ENCODE measurements at regions of chr12 and their contacts with region 1.

Region 1: DNA sequence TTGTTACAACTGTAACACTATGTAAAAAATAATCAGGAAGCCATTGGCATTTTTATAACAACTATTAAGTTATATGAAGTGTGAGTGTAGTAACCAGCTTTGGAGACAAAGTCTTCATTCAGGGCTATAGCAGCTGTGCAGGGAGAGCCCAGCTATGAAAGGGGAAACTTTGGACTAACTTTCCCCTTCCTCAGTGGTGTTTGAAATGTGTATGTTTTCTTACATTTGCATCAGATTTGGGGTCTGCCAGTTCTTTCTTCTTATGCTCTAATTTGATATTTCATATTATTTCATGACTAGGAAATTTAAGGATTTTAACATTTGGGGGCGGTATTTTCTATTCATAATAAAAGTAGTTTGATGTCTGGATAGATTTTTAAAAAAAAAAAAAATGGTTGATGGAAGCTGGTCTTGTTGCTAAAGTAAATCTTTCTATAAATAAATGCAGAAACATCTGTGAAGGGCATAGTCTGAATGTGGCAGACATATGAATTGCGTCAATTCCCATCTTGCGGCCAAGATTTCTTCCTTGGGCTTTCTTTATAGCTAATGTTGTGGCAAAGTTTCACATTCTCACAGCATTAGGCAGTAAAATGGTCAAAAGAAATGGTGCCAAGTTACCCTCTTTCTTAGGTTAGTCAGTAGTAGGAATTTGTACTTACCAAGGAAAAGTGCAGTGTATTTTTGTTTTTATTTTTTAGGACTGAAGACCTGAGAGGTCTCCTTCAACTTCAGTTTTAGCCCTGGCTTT is 35.6 kb downstream of the RASSF8 start:
- DNase-seq: no peak
- ATAC-seq: no peak
- H3K4me3 ChIP-seq: no peak overlapping the region
- H3K4me3 Mint-ChIP-seq: no peak overlapping the region
- H3K27ac ChIP-seq: no peak overlapping the region
- H3K27ac Mint-ChIP-seq: no peak overlapping the region
- H3K4me1 ChIP-seq: no peaks in the 10 kb centered on the region
- H3K4me1 Mint-ChIP-seq: no peaks in the 10 kb centered on the region
- H3K27me3 ChIP-seq: no peaks in the 10 kb centered on the region
- H3K27me3 Mint-ChIP-seq: peaks cover 0 to 4% of the 10 kb centered on the region in 2 donors

Region 2: DNA sequence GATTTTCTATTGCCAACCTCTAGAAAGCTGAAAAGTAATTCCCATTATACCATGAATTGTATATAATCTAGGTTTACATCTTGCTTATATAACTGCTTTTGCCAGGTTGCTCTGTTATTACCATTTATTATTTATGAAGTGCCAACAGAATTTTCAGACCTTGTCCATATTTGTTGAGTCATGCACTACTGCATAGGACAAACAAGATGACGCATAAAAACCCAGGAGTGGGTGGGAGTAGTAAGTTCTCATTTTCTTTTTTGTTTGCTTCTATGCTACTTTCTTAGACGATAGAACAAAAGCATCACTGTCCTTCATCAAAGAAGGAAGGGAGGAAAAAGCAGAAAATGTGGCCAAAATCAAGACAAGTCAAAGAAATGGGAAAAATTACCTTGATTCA is 154.6 kb before region 1 on chr12:
- CTCF ChIA-PET with region 1: no interaction called
- POLR2A ChIA-PET with region 1: no interaction called
- DNase-seq: no peak
- ATAC-seq: no peak
- H3K4me3 ChIP-seq: no peak overlapping the region
- H3K4me3 Mint-ChIP-seq: no peak overlapping the region
- H3K27ac ChIP-seq: no peak overlapping the region
- H3K27ac Mint-ChIP-seq: no peak overlapping the region
- H3K4me1 ChIP-seq: peaks cover 0 to 4% of the 10 kb centered on the region in 2 experiments
- H3K4me1 Mint-ChIP-seq: peaks cover 0 to 12% (median 4%) of the 10 kb centered on the region in 3 donors
- H3K27me3 ChIP-seq: no peaks in the 10 kb centered on the region
- H3K27me3 Mint-ChIP-seq: no peaks in the 10 kb centered on the region

Region 3: GRCh38 chr12:25866586-25867378 is 127.3 kb before region 1 on chr12:
- CTCF ChIA-PET with region 1: no interaction called
- POLR2A ChIA-PET with region 1: interaction called in 1 of 2 experiments, 10 read pairs
- DNase-seq: no peak
- ATAC-seq: no peak
- H3K4me3 ChIP-seq: no peak overlapping the region
- H3K4me3 Mint-ChIP-seq: no peak overlapping the region
- H3K27ac ChIP-seq: no peak overlapping the region
- H3K27ac Mint-ChIP-seq: no peak overlapping the region
- H3K4me1 ChIP-seq: no peaks in the 10 kb centered on the region
- H3K4me1 Mint-ChIP-seq: no peaks in the 10 kb centered on the region
- H3K27me3 ChIP-seq: no peaks in the 10 kb centered on the region
- H3K27me3 Mint-ChIP-seq: peaks cover 4% of the 10 kb centered on the region in 2 donors